ENCODE measurements at regions of chr17 and their contacts with region 1.

Region 1: DNA sequence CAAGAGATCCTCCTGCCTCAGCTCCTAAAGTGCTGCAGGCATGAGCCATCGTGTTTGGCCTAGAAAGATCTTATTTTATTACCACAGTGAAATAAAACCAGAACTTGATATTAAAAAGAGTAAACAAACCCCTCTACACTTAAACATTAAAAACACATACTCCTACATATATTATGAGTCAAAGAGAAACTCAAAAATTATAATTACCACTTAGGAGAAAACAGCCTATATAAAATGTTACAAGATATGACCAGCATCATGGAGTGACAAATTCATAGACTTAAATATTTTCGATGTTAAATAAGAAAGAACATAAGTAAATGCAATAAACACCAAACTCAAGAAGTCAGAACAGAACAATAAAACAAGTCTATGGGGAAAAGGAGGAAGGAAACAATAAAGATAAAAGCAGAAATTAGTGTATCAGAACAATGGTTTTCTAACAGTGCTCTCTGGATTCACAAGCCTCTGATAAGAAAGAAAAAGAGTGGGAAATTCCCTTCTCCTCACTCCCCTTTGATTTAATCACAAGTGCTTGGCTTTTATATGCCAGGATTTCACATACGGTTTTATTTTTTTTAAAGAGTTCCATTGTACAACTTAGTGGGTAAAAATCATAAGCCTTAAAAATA is 23.0 kb downstream of the SKAP1 start:
- DNase-seq: no peak
- ATAC-seq: peak; percentile 45
- H3K4me3 Mint-ChIP-seq: peak overlapping the region; percentile 18
- H3K27ac Mint-ChIP-seq: peak overlapping the region; percentile 90
- H3K4me1 Mint-ChIP-seq: peaks cover 55% of the 10 kb centered on the region
- H3K27me3 Mint-ChIP-seq: no peaks in the 10 kb centered on the region
- CTCF ChIP-seq: no peak

Region 2: GRCh38 chr17:48254896-48255295 is 152.2 kb before region 1 on chr17:
- CTCF ChIA-PET with region 1: no interaction called
- POLR2A ChIA-PET with region 1: no interaction called
- intact Hi-C with region 1: no loop called
- DNase-seq: no peak
- ATAC-seq: no peak
- H3K4me3 Mint-ChIP-seq: no peak overlapping the region
- H3K27ac Mint-ChIP-seq: no peak overlapping the region
- H3K4me1 Mint-ChIP-seq: peaks cover 4% of the 10 kb centered on the region
- H3K27me3 Mint-ChIP-seq: no peaks in the 10 kb centered on the region
- CTCF ChIP-seq: no peak

Region 3: DNA sequence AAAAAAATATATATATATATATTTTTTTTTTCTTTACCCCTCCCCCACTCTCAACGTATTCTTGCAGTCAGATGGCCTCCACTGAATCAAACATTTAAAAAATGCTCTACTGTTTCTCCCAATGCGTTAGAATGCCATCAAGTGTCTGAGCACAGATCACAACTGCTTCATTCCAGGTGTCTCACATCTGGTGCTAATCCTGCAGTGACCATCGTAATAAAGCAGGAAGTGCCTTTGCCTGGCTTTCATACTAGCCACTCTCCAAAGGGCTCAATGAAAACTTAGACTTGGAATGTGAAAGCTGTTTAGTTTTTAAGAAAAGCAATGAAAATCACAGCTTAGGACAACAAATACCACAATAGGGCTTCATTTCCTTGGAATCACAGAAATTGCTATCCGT is 14.2 kb before region 1 on chr17:
- CTCF ChIA-PET with region 1: interaction called, 19 read pairs
- POLR2A ChIA-PET with region 1: no interaction called
- intact Hi-C with region 1: no loop called
- DNase-seq: no peak
- ATAC-seq: no peak
- H3K4me3 Mint-ChIP-seq: no peak overlapping the region
- H3K27ac Mint-ChIP-seq: no peak overlapping the region
- H3K4me1 Mint-ChIP-seq: peaks cover 49% of the 10 kb centered on the region
- H3K27me3 Mint-ChIP-seq: no peaks in the 10 kb centered on the region
- CTCF ChIP-seq: no peak

Measured in activated CD8-positive, alpha-beta T cell treated with anti-CD3 and anti-CD28 coated beads for 36 hours (primary cell).